Activated T-helper 2 cell treated with anti-CD3 and anti-CD28 coated beads, Interferon-gamma antibody, Interleukin-2, Interleukin-4, amounts not matched to agents 10 μg/mL and 5 μg/mL and 100 μg/mL, durations not matched to agents 14 hours and 24 hours and 36 hours (primary cell): ENCODE measurements at regions of chr1 and their contacts with region 1.

Region 1: DNA sequence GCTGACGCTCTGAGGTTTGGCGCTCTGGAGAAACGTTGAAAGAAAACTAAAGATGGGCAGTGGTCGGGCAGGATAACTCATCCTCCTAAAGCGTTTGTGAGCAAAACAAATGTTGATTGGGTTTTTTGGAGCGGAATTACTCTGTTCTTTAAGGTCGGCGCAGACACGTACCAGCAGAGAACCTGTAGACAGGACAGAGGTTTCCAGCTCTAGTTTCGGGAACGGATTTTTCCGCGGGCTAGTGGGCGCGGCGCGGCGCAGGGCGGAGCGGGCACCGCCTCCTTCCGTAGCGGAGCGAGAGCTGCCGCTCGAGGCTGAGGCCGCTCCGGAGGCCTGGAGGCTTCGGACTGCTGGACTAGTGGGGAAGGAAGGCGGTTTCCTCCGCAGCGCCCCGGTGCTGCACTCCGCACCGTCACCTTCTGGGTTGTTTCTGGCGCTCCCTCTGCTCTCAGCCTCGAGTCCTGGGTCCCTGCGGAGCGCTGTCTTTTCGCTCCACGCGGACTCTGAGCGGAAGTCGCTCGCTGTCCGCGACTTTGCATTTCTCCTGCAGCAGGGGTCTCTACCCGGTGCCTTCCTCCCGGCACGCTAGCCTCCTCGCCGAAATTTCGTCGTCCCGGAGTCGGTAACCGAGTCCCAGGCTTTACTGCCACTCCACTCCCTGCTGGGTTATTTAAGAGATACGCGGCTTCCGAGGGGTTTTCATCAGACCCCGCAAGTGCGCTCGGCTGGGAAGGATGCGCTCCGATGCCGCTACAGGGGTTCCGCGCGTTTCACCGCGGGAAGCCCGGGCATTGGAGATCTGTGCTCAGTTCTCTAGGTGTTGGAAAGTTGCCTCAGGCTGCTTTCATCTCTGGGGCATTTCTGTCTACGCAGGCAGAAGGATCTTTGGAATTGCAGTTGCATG is 7.0 kb downstream of the FOXD2 start:
- DNase-seq: no peak
- H3K4me3 Mint-ChIP-seq: peak overlapping the region; percentile 50
- H3K27ac Mint-ChIP-seq: peak overlapping the region; percentile 2
- H3K4me1 Mint-ChIP-seq: peaks cover 13% of the 10 kb centered on the region
- H3K27me3 Mint-ChIP-seq: peaks cover 49% of the 10 kb centered on the region

Region 2: DNA sequence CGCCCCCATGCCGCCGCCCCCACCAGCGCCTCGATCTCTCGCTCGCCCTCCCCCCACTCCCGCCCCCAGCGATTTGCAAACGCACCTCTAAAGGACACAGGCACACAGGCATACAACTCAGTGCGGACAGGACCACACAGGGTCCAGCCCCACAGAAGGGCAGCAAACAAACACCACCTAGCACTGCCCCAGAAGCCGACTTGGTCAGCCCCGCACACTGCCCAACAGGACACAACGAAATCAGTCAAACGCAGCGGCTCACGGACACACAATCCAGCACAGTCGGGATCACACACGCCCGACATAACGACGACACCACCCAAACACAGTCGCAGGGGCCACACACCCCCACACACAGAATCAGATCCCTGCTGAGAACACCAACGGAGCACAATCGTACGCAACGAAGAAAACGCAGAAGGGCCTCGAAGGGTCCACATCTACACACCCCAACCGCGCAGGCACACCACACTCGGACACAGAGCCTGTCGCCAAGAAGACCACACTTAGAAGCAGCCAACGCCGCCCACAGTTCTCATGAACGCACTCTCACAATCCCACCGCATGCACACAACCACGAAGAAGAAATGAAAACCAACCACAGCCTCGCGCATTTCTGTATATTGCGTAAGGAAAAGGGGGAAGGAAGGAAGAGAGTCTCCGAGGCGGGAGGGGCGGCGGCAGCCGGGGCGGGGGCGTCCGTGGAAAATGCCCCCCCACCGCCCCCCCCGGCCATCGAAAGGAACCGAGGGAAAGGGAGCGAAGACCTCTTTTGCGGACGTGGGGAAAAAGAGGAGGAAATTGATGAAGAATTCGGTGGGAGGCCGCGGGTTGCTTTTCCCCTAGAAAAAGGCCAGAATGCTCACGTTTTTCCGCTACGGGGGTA is 213.3 kb before region 1 on chr1:
- intact Hi-C with region 1: loop called (anchors 2 kb)
- DNase-seq: peak; percentile 27
- H3K4me3 Mint-ChIP-seq: peak overlapping the region; percentile 81
- H3K27ac Mint-ChIP-seq: peak overlapping the region; percentile 29
- H3K4me1 Mint-ChIP-seq: peaks cover 29% of the 10 kb centered on the region
- H3K27me3 Mint-ChIP-seq: peaks cover 82% of the 10 kb centered on the region

Region 3: GRCh38 chr1:47416319-47417169 is 28.3 kb before region 1 on chr1:
- intact Hi-C with region 1: loop called (anchors 2 kb)
- DNase-seq: no peak
- H3K4me3 Mint-ChIP-seq: peak overlapping the region; percentile 43
- H3K27ac Mint-ChIP-seq: no peak overlapping the region
- H3K4me1 Mint-ChIP-seq: peaks cover 4% of the 10 kb centered on the region
- H3K27me3 Mint-ChIP-seq: peaks cover 68% of the 10 kb centered on the region